ENCODE measurements at regions of chr2 and their contacts with region 1.

Region 1: DNA sequence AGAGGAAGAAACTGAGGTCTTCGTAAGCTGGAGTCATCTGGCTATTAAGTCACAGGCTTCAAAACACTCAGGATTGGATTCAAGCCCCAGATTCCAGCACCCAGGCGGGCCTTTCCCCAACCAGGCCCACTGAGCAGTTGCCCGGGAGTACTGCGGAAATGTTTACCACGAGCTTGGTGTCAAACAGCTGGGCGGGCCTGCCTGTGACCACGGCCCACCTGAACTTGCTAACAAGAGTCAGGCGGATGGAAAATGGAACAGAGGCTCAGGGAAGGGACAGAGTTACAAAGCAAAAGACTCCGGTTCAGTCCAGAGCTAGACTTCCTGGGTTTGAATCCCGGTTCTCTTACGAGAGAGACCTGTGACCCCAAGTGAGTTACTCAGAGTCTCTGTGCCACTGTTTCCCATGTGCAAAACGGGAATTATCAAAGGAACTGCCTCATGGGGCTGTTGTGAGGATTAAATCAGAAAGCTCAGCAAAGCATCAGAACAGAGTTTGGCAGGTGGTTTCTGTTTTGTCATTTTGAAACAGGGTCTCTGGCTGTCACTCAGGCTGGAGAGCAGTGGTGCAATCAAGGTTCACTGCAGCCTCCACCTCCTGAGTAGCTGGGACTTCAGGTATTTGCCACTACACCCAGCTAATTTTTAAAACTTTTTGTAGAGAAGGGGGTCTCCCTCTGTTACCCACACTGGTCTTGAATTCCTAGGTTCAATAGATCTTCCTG is 49.0 kb upstream of the TFCP2L1 start:
- DNase-seq: no peak
- ATAC-seq: no peak
- H3K4me3 ChIP-seq: no peak overlapping the region
- H3K27ac ChIP-seq: no peak overlapping the region
- H3K4me1 ChIP-seq: peaks cover 0 to 8% of the 10 kb centered on the region in 2 experiments; a peak in 1 of 5 replicates
- H3K27me3 ChIP-seq: peaks cover 22 to 59% of the 10 kb centered on the region in 2 experiments
- CTCF ChIP-seq: no peak
- EP300 ChIP-seq: no peak
- POLR2A ChIP-seq: no peak
- RAD21 ChIP-seq: no peak

Region 2: DNA sequence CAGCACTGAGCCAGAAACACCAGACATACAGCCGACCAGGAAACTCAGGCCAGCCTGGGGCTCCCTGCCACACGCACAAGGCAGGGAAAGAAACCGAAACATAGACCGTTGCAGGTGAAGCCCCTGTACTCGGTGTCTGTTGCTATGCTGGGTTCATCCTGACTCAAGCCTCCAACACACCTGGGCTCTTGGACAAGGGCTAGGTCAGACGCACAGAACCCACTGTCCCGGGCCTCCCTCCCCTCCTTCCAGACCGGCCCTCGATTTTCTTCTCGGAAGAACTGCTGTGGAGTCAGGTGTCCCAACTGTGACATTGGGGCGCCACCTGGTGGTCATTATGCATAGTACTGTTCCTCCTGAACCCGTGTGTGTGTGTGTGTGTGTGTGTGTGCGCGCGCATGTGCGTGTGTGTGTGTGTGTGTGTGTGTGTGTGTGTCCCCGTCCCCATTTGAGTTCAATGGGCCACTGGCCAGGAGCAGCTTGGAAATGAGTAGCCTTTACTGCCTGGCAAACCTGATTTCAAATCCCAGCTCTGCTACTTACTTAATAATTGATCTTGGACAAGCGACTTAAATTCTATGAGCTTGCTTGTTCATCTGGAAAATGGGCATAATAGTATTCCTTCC is 653.7 kb before region 1 on chr2:
- CTCF ChIA-PET with region 1: no interaction called
- POLR2A ChIA-PET with region 1: no interaction called
- in situ Hi-C with region 1: loop called (anchors 25 kb)
- intact Hi-C with region 1: no loop called
- DNase-seq: peak; percentile 71 to 86 (median 78)
- ATAC-seq: peak; percentile 96
- H3K4me3 ChIP-seq: no peak overlapping the region
- H3K27ac ChIP-seq: no peak overlapping the region
- H3K4me1 ChIP-seq: peaks cover 0 to 5% of the 10 kb centered on the region in 2 experiments; a peak in 2 of 5 replicates
- H3K27me3 ChIP-seq: peaks cover 2 to 20% of the 10 kb centered on the region in 2 experiments; a peak in 3 of 5 replicates
- CTCF ChIP-seq: peak; percentile 74 to 78 (median 75)
- EP300 ChIP-seq: no peak
- POLR2A ChIP-seq: no peak
- RAD21 ChIP-seq: peak; percentile 73 to 87

Region 3: DNA sequence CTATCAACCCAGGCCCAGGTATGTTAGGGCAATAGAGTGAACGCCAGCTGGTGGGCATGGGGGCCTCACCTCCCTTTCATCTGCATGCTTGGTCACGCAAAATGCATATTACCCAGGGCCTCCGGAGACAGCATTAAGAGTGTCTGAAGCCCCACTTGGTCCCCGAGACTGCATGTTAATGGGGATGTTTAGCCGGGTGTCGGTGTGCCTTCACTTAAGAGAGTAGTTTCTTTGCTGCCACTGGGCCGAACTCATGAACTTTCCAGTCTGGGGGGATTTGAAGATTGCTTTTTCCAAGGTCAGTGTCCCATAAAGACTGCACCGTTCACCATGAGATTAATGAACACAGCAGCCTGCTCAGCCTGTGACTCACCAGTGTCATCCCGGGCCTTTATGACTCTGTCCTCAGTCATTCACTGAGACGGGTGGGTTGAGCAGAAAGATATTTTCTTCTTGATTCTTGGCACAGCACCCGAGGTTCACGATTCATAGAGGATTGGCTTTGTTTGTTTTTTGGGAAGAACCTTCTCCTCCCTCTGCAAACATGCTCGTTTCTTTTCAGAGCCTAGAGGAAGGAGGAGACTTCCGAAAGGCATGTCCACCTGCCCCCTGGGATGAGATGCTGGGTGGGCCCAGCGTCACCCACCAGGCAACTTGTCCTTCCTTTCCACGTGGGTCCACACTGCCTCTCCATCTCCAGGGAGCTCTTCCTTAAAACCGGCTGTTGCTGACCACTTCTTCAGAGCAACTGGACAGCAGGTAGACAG is 399.2 kb before region 1 on chr2:
- CTCF ChIA-PET with region 1: no interaction called
- POLR2A ChIA-PET with region 1: no interaction called
- in situ Hi-C with region 1: no loop called
- intact Hi-C with region 1: no loop called
- DNase-seq: peak in 2 of 4 experiments; percentile 14 to 29
- ATAC-seq: 0 out of 3 replicates have a peak, but pooled peaks have one; percentile 12
- H3K4me3 ChIP-seq: no peak overlapping the region
- H3K27ac ChIP-seq: no peak overlapping the region
- H3K4me1 ChIP-seq: peaks cover 25 to 37% of the 10 kb centered on the region in 2 experiments
- H3K27me3 ChIP-seq: peaks cover 0 to 22% of the 10 kb centered on the region in 2 experiments; a peak in 3 of 5 replicates
- CTCF ChIP-seq: no peak
- EP300 ChIP-seq: no peak
- POLR2A ChIP-seq: no peak
- RAD21 ChIP-seq: no peak

Region 4: DNA sequence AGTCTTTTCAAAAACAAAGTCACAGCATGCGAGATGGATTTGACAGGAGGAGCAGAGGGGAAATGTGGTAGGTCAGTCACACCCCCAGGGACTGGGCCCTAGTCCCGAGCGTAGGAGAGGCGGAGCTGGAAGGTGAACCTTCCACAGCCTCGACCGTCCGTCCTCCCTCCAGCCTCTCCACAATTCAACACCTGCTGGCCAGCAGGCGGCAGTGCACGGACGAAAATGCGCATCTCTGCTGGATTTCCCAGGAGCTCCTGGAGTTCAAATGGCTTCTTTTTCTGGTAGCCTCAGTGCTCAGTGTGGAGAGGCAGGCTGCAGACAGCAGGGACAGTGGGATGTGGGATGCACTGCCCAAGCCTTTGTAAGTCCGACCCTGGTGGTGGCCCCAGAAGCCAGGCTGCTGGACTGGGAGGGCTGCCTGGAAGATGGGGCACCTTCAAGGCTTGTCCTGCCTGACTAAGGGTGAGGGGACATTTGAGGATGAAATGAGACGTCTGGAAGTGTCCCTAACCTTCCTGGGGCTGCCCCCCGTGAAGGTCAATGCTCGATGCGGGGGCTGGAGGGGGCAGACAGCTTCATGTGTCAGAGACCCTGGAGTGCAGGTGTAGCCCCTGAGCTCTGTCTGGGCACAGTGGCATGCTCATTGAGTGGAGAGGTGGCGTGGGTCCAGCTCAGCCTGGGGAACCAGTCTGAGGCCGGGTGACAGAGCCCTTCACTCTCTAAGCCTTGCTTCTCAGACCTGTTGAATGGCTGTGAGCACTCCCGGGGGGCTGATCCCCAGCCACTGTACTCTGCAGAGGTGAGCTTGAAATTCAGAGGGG is 238.5 kb before region 1 on chr2:
- CTCF ChIA-PET with region 1: no interaction called
- POLR2A ChIA-PET with region 1: no interaction called
- in situ Hi-C with region 1: loop called (anchors 10 kb)
- intact Hi-C with region 1: no loop called
- DNase-seq: peak; percentile 68 to 74 (median 72)
- ATAC-seq: peak; percentile 97
- H3K4me3 ChIP-seq: no peak overlapping the region
- H3K27ac ChIP-seq: no peak overlapping the region
- H3K4me1 ChIP-seq: no peaks in the 10 kb centered on the region
- H3K27me3 ChIP-seq: peaks cover under 1 to 31% of the 10 kb centered on the region in 2 experiments; a peak in 3 of 5 replicates
- CTCF ChIP-seq: peak; percentile 76 to 85 (median 85)
- EP300 ChIP-seq: no peak
- POLR2A ChIP-seq: no peak
- RAD21 ChIP-seq: peak; percentile 61 to 86

Region 5: DNA sequence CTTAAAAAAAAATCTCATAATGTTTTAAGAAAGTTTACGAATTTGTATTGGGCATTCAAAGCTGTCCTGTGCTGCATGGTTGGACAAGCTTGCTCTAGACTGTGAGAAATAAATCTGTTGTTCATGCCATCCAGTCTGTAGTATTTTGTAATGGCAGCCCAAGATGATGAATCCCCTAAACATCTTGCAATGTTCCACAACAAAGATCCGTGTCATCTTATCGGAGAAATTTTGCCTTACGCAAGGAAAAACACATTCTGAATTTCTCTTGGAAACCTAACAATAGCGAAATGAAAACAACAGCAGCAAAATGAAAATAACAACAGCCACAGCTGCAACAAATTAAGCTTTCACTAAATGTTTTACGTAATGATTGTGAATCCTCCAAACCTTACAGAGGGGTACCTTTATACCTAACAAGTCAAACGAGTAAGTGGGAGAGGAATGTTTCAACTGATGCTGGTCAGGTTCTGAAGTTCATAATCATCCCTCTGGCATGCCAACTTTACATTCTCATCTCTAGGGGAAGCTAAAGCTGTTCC is 120.6 kb after region 1 on chr2:
- CTCF ChIA-PET with region 1: no interaction called
- POLR2A ChIA-PET with region 1: no interaction called
- in situ Hi-C with region 1: no loop called
- intact Hi-C with region 1: no loop called
- DNase-seq: no peak
- ATAC-seq: no peak
- H3K4me3 ChIP-seq: no peak overlapping the region
- H3K27ac ChIP-seq: no peak overlapping the region
- H3K4me1 ChIP-seq: peaks cover 0 to 5% of the 10 kb centered on the region in 2 experiments; a peak in 1 of 5 replicates
- H3K27me3 ChIP-seq: no peaks in the 10 kb centered on the region
- CTCF ChIP-seq: no peak
- EP300 ChIP-seq: no peak
- POLR2A ChIP-seq: no peak
- RAD21 ChIP-seq: no peak